ENCODE measurements at regions of chr5 and their contacts with region 1.

Region 1: DNA sequence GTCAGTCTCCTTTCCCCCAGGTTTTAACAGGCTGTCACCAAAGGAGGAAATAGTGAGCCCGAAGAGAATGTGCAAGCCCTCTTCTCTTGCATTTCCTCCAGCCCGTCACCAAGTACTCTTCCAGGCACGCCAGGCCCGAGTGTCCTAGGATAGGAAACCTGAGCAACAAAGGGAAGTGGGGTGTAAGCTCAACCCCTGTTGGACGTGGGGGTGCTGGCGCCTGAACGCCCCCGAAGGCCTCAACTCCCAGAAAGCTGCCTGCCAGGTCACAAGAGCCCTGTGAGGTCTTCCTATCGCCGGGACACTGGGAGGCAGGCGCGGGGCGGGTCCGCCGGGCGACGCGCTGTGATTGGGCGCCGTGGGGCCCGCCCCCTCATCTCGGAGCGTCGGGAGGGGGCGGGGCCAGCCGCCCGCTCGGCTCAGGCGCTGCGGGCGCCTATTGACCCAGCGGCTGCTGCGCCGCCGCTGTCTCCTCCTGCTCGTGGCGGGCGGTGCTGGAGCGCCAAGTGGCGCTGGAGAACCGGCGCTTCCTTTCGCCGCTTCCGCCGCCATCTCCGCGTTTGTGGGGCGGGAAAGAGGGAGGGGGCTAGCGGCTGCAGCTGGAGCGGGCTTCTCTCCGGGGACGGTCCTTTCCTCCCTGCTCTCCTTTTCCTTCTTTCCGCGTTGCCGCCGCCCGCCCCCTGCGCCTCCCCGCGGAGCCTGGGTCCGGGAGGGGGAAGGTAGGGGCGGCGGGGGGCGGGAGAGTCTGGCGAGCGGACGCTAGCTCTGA is 572 bp upstream of the MAN2A1 start:
- DNase-seq: peak; percentile 78
- ATAC-seq: peak; percentile 84
- H3K4me3 Mint-ChIP-seq: peak overlapping the region; percentile 96
- H3K27ac Mint-ChIP-seq: peak overlapping the region; percentile 100
- H3K4me1 Mint-ChIP-seq: peaks cover 31% of the 10 kb centered on the region
- H3K27me3 Mint-ChIP-seq: no peaks in the 10 kb centered on the region
- CTCF ChIP-seq: 0 out of 2 replicates have a peak, but pooled peaks have one; percentile 5

Region 2: DNA sequence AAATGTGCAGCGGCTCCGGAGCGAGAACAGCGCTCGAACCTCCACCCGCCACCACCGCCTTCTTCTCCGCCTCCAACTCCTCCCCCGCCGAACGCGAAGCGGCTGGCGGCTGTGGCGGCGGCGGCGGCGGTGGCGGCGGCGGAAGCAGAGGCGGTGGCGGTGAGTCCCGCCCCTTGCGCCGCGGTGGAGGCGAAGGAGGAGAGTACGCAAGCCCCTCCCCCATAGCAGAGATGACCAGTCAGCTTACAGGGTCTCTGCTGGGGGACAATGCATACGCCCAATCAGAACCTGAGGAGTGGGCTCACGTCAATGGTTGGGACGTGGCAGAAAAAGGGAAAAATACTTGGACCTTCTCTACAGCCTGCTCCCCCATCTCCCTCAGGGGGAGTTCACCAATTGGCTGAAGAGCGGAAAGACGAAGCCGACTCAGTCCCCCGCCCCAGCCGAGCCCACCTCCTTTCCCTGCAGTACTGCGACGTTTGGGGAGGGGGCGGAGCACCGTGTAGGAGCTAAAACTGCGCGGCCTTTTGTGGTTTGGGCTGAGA is 279.2 kb before region 1 on chr5 and contains the start of gene PJA2:
- CTCF ChIA-PET with region 1: interaction called, 8 read pairs
- POLR2A ChIA-PET with region 1: interaction called, 14 read pairs
- DNase-seq: peak; percentile 99
- ATAC-seq: peak; percentile 92
- H3K4me3 Mint-ChIP-seq: peak within 1 kb of the TSS; percentile 97
- H3K27ac Mint-ChIP-seq: peak within 1 kb of the TSS; percentile 100
- H3K4me1 Mint-ChIP-seq: peaks cover 50% of the 10 kb centered on the region
- H3K27me3 Mint-ChIP-seq: no peaks in the 10 kb centered on the region
- CTCF ChIP-seq: no peak
- total RNA-seq, gene PJA2: 46.8 to 51.5 TPM (median 48.7 TPM) in 3 replicates

Region 3: DNA sequence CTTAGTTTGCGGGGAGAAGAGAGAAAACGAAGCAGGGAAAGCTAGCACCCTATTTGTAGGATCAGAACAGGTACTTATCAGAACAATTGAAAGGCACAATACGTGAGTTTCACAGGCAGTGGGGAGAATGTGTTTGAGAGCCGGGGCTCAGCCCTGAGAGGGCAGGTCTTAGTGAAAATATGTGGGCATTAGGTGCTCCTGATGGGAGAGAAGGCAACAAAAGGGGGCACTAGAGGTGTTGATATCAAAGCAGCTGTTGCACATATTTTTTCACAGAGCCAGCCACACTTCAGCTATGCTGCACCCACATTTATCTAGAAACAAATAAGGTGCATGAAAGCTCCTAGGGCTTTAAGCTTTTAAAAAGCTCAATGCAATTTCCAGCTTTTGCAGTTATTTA is 99.2 kb before region 1 on chr5:
- CTCF ChIA-PET with region 1: interaction called, 14 read pairs
- POLR2A ChIA-PET with region 1: no interaction called
- DNase-seq: no peak
- ATAC-seq: peak; percentile 70
- H3K4me3 Mint-ChIP-seq: no peak overlapping the region
- H3K27ac Mint-ChIP-seq: no peak overlapping the region
- H3K4me1 Mint-ChIP-seq: no peaks in the 10 kb centered on the region
- H3K27me3 Mint-ChIP-seq: no peaks in the 10 kb centered on the region
- CTCF ChIP-seq: no peak

Region 4: GRCh38 chr5:109676920-109677319 is 12.2 kb before region 1 on chr5:
- CTCF ChIA-PET with region 1: interaction called, 43 read pairs
- POLR2A ChIA-PET with region 1: no interaction called
- DNase-seq: no peak
- ATAC-seq: no peak
- H3K4me3 Mint-ChIP-seq: no peak overlapping the region
- H3K27ac Mint-ChIP-seq: no peak overlapping the region
- H3K4me1 Mint-ChIP-seq: peaks cover 19% of the 10 kb centered on the region
- H3K27me3 Mint-ChIP-seq: no peaks in the 10 kb centered on the region
- CTCF ChIP-seq: no peak

Region 5: DNA sequence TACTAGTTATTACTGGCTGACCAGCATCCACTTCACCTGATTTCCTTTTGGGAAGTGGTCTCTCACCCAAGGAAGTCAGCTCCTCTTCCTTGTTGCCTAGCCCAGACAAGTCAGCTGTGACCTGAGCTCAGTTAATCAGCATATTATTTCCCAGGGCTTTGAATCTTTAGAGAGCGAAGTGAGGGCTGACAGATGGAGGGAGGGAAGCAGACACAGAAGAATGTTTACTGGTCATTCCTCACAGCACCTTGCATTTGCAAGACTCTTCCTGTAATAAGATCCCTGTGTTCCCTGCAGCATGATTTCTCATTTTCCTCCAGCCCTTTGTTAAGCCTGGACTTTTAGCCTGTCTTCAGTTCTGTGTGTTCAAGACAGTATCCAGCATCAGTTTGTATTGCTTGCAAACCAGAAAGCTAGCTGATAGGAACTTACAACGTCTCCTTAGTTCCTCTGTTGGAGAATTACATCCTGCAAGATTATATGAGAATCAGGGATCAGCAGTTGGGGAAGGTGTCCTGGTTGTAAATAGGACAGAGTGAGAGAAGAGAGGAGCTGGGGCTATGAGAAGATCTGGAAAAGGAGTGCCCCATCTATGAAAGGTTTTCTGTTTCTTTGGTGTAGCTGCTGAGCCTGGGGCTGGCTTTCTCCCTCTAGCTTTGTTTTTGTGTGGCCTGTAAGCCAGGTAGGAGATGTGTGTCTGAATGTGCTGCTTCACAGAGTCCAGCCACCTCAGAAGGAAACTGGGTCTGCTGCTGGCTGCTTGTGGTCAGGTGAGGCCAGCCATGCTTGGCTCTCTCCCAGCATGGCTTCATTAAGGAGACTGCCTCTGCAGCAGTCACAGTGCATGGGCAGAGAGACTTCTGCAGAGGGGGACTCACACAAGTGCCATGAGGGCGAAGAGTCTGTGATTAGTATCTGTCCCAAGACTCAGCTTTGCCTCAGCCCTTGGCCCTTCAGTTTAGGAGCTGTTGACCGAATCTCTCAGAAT is 50.9 kb after region 1 on chr5:
- CTCF ChIA-PET with region 1: interaction called, 15 read pairs
- POLR2A ChIA-PET with region 1: interaction called, 8 read pairs
- DNase-seq: peak; percentile 21
- ATAC-seq: peak; percentile 88
- H3K4me3 Mint-ChIP-seq: peak overlapping the region; percentile 63
- H3K27ac Mint-ChIP-seq: peak overlapping the region; percentile 99
- H3K4me1 Mint-ChIP-seq: peaks cover 83% of the 10 kb centered on the region
- H3K27me3 Mint-ChIP-seq: no peaks in the 10 kb centered on the region
- CTCF ChIP-seq: no peak

Measured in WTC11 (cell line).